ENCODE measurements at regions of chr12 and their contacts with region 1.

Region 1: GRCh38 chr12:127108360-127109215 is 1158.4 kb upstream of the TMEM132C start:
- DNase-seq: peak; percentile 86
- H3K4me3 ChIP-seq: no peak overlapping the region
- H3K27ac ChIP-seq: no peak overlapping the region
- H3K4me1 ChIP-seq: no peaks in the 10 kb centered on the region
- H3K27me3 ChIP-seq: no peaks in the 10 kb centered on the region

Region 2: DNA sequence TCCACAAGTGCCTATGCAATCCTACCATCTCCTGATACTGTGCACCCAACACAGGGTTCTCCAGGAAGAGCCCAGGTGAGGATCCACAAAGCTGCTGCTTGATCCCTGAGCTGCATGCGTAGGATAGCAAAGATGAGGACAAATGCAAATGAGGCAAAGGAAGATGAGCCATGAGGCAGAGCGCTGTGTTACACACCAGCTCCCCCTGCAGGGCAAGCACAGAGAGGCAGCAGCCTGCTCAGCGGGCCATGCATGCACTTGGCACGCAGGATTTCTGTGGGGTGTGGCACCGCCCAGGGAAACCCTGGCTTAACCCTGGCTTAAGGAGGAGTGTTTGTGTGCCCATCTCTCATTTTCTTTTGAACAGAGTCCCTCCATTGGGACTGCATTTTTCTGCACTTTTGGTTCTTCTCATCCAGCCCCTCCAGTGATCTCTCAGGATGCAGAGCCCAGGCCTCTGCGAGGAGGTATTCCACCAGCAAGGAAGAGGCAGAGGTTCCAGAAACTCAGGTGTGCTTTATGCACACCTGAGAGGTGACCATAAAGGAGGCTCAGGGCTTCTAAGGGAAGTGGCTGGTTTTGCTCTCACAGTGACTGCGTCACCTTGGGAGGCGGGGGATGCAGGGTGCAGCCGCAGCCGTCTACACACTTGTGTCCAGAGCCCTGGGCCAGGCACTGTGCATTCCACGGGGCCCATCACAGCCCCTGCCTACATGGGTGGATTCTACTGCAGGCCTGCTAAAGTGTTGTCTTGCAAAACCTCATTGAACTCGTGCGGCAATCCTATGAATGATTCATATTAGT is 185.1 kb after region 1 on chr12:
- in situ Hi-C with region 1: loop called (anchors 5 kb)
- DNase-seq: peak; percentile 89
- H3K4me3 ChIP-seq: no peak overlapping the region
- H3K27ac ChIP-seq: no peak overlapping the region
- H3K4me1 ChIP-seq: no peaks in the 10 kb centered on the region
- H3K27me3 ChIP-seq: no peaks in the 10 kb centered on the region

Region 3: DNA sequence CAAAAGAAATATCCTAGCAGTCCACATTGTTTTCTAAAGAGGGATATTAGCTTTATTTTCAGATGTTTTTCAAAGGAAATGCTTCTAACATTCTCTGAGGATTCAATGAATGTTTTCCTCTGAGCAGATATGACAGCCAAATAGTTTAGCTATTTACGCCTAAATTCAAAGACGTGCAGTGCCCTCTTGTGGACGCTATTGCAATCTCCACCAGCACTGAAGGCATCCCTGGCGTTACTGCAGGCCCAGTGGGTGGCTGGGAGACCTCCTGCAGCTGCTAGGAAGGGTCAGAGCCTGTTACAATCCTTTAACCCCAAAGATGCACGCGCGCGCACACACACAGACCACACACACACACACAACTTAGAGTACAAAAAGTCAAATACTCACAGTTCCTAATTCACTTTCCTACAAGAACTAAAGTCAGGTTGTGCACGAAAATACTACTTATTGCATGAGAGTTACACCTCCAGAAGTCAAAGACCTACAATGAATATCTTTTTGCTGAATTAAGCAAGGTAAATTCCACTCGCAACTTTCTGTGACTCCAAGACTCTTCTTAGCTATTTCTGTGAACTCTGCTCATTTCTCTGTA is 569.0 kb after region 1 on chr12:
- in situ Hi-C with region 1: loop called (anchors 25 kb)
- DNase-seq: peak; percentile 84
- H3K4me3 ChIP-seq: no peak overlapping the region
- H3K27ac ChIP-seq: no peak overlapping the region
- H3K4me1 ChIP-seq: peaks cover 4% of the 10 kb centered on the region; the same call in 1 of the 2 replicates
- H3K27me3 ChIP-seq: no peaks in the 10 kb centered on the region

Region 4: DNA sequence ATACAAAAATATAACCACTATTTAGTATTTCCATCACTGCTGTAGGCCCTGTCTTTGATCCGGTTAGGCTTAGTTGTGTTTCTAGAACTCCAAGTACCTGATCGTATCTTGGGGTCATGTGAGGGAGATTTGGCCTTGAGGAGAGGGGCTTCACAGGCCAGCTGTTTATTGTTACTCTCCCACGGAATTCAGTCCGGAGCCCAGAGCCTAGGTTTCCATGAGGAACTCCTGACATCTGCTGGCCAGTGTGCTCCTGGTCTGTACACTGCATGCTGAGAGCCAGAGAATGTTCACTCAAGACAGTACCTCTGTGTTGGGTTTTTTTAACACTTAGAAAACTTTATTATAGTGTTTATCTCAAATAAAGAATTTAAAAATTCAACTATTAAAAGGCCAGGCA is 817.4 kb after region 1 on chr12:
- in situ Hi-C with region 1: loop called (anchors 25 kb)
- DNase-seq: peak; percentile 64
- H3K4me3 ChIP-seq: no peak overlapping the region
- H3K27ac ChIP-seq: no peak overlapping the region
- H3K4me1 ChIP-seq: peaks cover 19% of the 10 kb centered on the region
- H3K27me3 ChIP-seq: no peaks in the 10 kb centered on the region

Region 5: DNA sequence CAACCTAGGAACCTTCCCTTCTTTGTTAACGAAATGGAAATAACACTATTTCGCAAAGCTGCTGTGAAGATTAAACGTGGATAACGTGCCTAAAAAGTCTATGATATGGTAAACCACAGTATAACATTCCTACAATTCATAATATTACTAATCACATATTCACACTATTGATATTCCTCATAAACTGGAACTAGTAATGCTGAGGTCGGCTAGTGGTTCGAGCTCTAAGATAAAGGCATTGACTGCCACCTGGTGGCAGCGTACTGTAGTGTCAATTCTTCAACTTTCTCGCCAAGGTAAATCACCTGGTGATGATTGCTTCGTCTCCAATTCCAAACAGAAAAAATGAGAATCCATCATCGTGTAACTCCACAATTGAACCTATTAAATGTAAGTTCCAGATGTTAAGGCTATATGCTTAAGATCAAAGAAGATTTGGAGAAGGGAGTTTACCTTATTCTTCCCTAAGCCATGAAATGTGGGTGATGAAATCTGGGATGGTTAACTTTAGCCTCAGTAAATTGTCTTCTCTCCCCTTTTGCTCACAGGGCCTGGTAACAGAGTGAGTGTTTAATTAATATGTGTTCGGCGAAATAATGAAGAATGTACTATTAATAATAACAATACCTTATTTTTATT is 960.9 kb after region 1 on chr12:
- in situ Hi-C with region 1: loop called (anchors 25 kb)
- DNase-seq: peak; percentile 79
- H3K4me3 ChIP-seq: no peak overlapping the region
- H3K27ac ChIP-seq: no peak overlapping the region
- H3K4me1 ChIP-seq: no peaks in the 10 kb centered on the region
- H3K27me3 ChIP-seq: peaks cover 6% of the 10 kb centered on the region; the same call in 1 of the 2 replicates